Activated B cell treated with CpG ODN at 0.5 μM for 24 hours (primary cell): ENCODE measurements at regions of chr9 and their contacts with region 1.

Region 1: GRCh38 chr9:127423934-127424675 is at the start of gene ZNF79:
- DNase-seq: peak; percentile 93
- ATAC-seq: peak; percentile 94
- H3K4me3 Mint-ChIP-seq: peak within 1 kb of the TSS; percentile 99
- H3K27ac Mint-ChIP-seq: peak within 1 kb of the TSS; percentile 98
- H3K4me1 Mint-ChIP-seq: peaks cover 41% of the 10 kb centered on the region
- H3K27me3 Mint-ChIP-seq: no peaks in the 10 kb centered on the region
- CTCF ChIP-seq: no peak
- total RNA-seq, gene ZNF79: 13.5 and 14.0 TPM in 2 replicates

Region 2: GRCh38 chr9:127214421-127215267 is 209.5 kb before region 1 on chr9:
- CTCF ChIA-PET with region 1: interaction called, 3 read pairs
- POLR2A ChIA-PET with region 1: no interaction called
- intact Hi-C with region 1: loop called (anchors 2 kb)
- DNase-seq: no peak
- ATAC-seq: peak; percentile 86
- H3K4me3 Mint-ChIP-seq: no peak overlapping the region
- H3K27ac Mint-ChIP-seq: no peak overlapping the region
- H3K4me1 Mint-ChIP-seq: peaks cover 4% of the 10 kb centered on the region
- H3K27me3 Mint-ChIP-seq: no peaks in the 10 kb centered on the region
- CTCF ChIP-seq: peak; percentile 17

Region 3: GRCh38 chr9:127244609-127245601 is 179.2 kb before region 1 on chr9:
- CTCF ChIA-PET with region 1: no interaction called
- POLR2A ChIA-PET with region 1: no interaction called
- intact Hi-C with region 1: loop called (anchors 1 kb)
- DNase-seq: peak; percentile 91
- ATAC-seq: peak; percentile 100
- H3K4me3 Mint-ChIP-seq: peak overlapping the region; percentile 90
- H3K27ac Mint-ChIP-seq: peak overlapping the region; percentile 86
- H3K4me1 Mint-ChIP-seq: peaks cover 11% of the 10 kb centered on the region
- H3K27me3 Mint-ChIP-seq: no peaks in the 10 kb centered on the region
- CTCF ChIP-seq: no peak

Region 4: DNA sequence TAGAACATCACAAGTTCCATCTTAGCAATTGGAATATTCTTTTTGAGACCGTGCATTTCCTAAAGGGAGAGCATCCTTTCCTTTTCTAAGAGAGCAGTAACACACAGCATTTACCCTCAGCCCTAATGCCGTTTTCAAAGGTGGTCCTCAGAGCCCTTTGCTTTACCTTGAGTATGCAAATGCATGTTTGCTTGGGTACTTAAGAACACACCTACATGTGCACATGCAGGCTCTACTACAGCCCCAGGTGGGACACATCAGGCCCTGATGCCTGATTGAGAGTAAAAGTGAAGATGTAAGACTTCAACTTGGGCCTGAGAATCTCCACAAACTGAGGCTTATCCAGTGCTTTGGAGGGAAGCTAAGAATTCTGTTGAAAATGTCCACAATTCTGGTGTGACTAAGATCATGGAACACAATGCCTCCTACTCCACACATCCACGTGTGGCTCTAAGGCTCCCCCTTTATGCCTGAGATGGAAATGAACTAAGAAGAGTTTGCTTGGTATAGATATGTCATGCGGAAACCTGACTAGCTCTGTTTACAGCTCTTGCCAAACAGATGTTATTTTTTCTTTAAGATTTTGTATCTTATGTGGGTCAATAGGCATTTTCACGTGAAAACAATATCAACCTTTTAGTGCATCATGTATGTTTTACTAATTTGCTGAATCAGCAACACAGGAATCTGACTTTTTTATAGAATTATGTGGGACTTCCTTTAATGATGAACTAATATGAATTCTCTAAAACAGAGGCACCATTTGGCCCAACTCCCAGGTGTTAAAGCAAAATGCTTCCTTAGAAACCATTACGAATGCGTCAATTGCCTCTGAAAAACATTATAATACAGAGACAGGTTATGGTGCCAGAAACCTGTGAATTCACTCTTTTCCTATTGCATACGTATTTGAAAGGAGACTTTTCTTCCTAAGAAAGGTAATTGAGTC is 76.0 kb before region 1 on chr9:
- CTCF ChIA-PET with region 1: no interaction called
- POLR2A ChIA-PET with region 1: no interaction called
- intact Hi-C with region 1: no loop called
- DNase-seq: no peak
- ATAC-seq: no peak
- H3K4me3 Mint-ChIP-seq: no peak overlapping the region
- H3K27ac Mint-ChIP-seq: no peak overlapping the region
- H3K4me1 Mint-ChIP-seq: no peaks in the 10 kb centered on the region
- H3K27me3 Mint-ChIP-seq: no peaks in the 10 kb centered on the region
- CTCF ChIP-seq: no peak

Region 5: DNA sequence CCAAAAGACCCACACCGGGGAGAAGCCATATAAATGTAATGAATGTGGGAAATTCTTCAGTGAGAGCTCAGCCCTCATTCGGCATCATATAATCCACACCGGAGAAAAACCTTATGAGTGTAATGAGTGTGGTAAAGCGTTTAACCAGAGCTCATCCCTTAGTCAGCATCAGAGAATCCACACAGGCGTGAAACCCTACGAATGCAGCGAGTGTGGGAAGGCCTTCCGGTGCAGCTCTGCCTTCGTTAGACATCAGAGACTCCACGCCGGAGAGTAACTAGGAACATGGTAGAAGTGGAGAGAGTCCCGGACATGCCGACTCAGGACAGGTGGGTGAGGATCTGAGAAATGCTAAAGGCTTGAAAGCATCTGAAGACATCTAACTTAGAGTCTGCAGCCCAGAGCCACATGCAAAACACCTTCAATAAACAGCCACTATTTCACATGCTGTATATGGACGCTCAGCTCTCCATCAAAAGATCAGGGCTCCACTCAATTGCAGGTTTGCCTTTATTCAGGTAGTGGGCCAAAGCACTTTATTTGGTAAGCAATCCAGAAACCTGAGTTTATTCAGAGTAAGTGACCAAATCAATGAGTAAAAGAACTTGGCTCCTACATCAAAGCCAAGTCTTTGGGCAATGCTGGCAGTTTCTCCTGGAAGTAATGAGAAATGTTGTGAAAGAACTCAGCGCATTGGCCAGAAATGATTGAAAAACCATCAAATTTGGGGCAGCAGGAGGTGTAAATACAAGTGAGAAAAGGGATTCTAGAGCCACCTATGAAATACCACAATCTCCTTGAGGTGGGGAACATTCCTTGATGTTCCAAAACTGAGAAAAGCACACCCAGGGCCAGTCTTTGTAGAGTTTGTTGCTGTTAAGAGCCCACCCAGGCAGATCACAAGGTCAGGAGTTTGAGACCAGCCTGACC is 21.1 kb after region 1 on chr9:
- CTCF ChIA-PET with region 1: no interaction called
- POLR2A ChIA-PET with region 1: interaction called, 39 read pairs
- intact Hi-C with region 1: no loop called
- DNase-seq: no peak
- ATAC-seq: no peak
- H3K4me3 Mint-ChIP-seq: no peak overlapping the region
- H3K27ac Mint-ChIP-seq: peak overlapping the region; percentile 50
- H3K4me1 Mint-ChIP-seq: peaks cover 31% of the 10 kb centered on the region
- H3K27me3 Mint-ChIP-seq: no peaks in the 10 kb centered on the region
- CTCF ChIP-seq: no peak

Region 6: DNA sequence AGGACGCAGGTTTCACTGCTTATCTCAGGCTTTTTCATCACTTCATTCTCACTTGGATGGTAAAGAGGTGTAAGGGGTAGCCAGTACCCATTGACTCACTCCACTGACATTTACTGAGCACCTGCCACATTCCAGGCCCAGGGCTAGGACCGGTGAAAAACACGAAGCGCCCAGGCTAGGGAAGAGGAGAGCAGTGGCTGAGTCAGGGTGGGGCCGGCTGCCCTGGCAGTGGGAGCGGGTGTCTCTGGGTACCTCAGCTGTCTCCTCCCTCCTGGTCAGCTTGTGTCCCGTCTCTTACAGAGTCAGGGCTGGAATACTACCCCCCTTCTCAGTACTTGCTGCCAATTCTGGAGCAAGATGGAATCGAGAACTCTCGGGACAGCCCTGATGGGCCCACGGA is 49.4 kb after region 1 on chr9:
- CTCF ChIA-PET with region 1: no interaction called
- POLR2A ChIA-PET with region 1: no interaction called
- intact Hi-C with region 1: no loop called
- DNase-seq: no peak
- ATAC-seq: no peak
- H3K4me3 Mint-ChIP-seq: no peak overlapping the region
- H3K27ac Mint-ChIP-seq: no peak overlapping the region
- H3K4me1 Mint-ChIP-seq: no peaks in the 10 kb centered on the region
- H3K27me3 Mint-ChIP-seq: no peaks in the 10 kb centered on the region
- CTCF ChIP-seq: no peak